ENCODE measurements at regions of chr14 and their contacts with region 1.

Region 1: DNA sequence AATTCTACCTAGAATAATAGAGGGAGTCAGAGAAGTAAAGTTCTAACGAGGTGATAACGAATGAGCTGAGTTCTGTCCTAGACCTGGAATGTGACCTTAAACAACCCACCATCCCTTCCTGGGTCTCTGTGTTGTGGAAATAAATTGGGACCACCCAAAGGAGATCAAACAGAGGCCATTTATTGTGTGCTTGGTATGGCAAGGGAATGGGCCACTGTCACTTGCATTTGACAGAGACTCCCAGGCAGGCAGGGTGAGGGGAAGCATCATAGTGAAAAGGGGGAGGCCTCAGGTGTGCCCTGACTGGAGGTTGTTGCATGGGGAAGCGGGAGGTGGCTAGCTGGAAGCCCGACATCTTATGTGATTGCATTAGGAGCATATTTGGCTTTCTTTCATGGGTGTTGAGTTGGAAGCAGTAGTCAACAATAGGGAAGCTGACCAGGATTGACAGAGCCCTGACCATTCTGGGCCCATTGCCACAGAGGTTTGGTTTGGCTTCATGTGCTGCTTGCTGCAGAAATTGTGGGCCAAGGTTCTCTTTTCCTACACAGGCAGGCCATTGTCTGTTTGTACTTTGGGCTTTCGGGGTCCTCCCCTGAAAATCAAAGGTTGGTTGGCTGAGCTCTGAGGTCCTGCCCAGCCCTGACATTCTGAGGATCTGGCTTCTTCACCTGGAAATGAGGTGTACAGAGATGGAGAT is 17.6 kb upstream of the FAM181A start:
- DNase-seq: no peak
- CTCF ChIP-seq: no peak

Region 2: GRCh38 chr14:93655078-93655750 is 254.4 kb before region 1 on chr14:
- in situ Hi-C with region 1: loop called (anchors 10 kb)
- DNase-seq: peak; percentile 46
- CTCF ChIP-seq: peak; percentile 57

Region 3: DNA sequence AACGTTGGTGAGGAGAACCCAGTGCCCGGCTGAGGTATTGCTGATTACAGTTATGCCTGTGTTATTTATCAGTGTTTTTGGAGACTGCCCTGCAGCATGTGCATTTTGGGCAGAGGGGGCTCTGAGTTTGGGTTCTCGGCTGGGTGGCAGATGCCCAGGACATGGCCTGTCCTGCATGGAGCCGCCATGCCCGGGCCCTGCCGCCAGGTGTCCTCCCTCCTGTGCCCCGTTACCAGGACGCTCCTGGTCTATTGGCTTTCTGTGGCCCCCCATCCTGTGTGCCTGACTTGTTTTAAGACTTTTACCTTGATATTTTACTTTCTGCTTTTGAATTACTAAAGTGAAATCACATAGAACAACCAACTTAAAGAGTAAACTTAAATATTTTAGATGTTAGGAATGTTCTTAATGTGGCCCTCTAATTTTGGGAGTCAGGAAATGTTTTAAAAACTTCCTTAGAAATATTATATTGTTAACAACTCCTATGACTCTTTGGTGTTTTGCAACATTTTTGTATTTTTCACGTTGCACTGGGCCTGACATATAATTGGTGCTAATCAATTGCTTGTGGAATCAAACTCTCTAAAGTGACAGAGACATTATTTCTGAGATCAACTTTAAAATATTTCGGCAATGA is 173.1 kb before region 1 on chr14:
- in situ Hi-C with region 1: no loop called
- DNase-seq: peak; percentile 57
- CTCF ChIP-seq: peak; percentile 43